ENCODE measurements at regions of chr14 and their contacts with region 1.

Region 1: GRCh38 chr14:55354500-55354899 is 57.1 kb downstream of the ATG14 start:
- DNase-seq: no peak
- H3K4me3 ChIP-seq: no peak overlapping the region
- CTCF ChIP-seq: peak; percentile 49

Region 2: GRCh38 chr14:55212634-55213033 is 141.9 kb before region 1 on chr14:
- CTCF ChIA-PET with region 1: interaction called, 32 read pairs
- POLR2A ChIA-PET with region 1: no interaction called
- DNase-seq: no peak
- H3K4me3 ChIP-seq: no peak overlapping the region
- CTCF ChIP-seq: no peak

Region 3: GRCh38 chr14:55333711-55334485 is 20.6 kb before region 1 on chr14:
- CTCF ChIA-PET with region 1: interaction called, 13 read pairs
- POLR2A ChIA-PET with region 1: no interaction called
- DNase-seq: no peak
- H3K4me3 ChIP-seq: no peak overlapping the region
- CTCF ChIP-seq: no peak

Region 4: DNA sequence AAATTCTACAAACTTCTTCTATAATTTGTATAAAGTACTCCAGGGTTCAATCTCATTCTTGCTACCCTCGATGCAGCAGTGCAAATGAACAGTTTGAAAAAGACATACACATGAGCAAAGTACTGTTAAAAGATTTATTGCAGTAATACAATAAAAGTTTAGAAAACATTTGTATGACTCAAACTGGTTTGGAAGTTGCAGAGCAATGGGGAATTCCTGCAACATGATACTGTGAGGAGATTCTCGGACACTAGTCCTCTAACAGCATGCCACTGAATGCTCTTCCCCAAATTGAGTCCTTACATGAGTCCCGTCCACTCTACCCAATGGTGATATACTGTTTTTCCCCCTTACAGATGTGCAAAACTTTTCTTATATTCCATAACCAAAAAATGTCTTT is 11.8 kb after region 1 on chr14:
- CTCF ChIA-PET with region 1: interaction called, 26 read pairs
- POLR2A ChIA-PET with region 1: no interaction called
- DNase-seq: peak; percentile 33
- H3K4me3 ChIP-seq: no peak overlapping the region
- CTCF ChIP-seq: no peak

Region 5: DNA sequence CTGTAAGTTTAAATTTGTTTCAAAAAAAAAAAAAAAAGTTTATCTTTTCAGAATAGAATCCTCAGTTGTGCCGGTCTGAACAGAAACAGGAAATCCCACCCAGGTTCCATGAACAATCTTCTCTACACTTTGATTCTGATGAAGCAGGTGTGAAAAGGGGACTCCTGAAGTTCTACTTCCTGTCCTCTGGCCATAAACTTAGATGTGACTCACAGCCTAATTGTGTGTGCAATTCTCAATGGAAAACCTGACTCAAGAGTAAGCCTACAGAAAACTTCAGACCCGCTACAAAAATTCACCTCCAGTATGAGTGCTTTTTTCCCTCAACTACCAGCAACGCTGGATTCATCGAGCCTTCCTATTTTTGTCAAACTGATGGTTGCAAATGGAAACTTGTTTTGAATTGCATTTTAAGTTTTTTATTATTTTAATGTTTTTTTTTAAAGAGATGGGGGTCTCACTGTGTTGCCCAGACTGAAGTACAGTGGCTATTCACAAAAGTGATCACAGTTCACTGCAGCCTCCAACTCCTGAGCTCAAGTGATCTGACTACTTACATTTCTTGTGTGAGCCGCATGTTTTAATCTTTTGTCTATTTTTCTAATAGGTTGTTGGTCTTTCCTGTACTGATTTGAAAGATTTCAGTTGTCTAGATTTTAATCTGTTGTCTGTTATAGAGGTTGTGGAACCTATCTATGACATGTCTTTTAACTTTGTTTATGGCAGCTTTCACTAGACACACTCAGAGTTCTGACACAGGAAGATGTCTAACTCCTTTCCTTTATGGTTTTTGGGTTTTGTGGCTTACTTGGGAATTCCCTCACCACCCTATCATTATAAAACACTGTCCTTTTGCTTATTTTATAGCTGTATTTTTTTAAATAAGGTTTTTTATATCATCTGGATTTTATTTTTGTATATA is 19.5 kb after region 1 on chr14:
- CTCF ChIA-PET with region 1: interaction called, 26 read pairs
- POLR2A ChIA-PET with region 1: no interaction called
- DNase-seq: no peak
- H3K4me3 ChIP-seq: no peak overlapping the region
- CTCF ChIP-seq: no peak

Measured in AG04449 (cell line).